Right ventricle myocardium superior (tissue), 1 donor: ENCODE measurements at regions of chr6 and their contacts with region 1.

Region 1: DNA sequence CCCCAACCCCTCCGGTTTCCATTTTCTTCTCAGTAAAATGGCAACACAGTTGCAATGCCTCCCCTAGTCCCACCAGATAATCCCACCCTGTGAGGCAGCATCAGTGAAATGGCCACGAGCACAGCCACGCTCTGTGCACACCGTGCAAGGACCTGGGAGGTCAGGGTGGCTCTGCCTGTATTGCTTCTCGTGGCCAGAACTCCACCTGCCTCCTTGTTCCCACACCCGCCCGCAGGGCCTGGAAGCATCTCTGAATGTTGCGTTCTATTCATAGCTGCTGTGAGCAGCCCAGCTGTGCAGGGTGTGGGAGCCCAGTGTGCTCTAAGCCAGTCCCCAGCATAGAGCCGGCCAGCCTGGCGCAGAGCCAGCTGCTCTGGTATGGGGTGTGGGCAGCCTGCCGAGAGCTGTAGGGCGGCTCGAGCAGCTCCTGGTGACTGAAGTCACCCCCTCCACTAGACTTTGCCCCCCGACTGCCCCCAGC is 161.1 kb downstream of the DLL1 start:
- DNase-seq: peak; percentile 89
- ATAC-seq: peak; percentile 88

Region 2: GRCh38 chr6:170049641-170050561 is 79.8 kb before region 1 on chr6:
- intact Hi-C with region 1: loop called (anchors 5 kb)
- DNase-seq: peak; percentile 92
- ATAC-seq: peak; percentile 90

Region 3: DNA sequence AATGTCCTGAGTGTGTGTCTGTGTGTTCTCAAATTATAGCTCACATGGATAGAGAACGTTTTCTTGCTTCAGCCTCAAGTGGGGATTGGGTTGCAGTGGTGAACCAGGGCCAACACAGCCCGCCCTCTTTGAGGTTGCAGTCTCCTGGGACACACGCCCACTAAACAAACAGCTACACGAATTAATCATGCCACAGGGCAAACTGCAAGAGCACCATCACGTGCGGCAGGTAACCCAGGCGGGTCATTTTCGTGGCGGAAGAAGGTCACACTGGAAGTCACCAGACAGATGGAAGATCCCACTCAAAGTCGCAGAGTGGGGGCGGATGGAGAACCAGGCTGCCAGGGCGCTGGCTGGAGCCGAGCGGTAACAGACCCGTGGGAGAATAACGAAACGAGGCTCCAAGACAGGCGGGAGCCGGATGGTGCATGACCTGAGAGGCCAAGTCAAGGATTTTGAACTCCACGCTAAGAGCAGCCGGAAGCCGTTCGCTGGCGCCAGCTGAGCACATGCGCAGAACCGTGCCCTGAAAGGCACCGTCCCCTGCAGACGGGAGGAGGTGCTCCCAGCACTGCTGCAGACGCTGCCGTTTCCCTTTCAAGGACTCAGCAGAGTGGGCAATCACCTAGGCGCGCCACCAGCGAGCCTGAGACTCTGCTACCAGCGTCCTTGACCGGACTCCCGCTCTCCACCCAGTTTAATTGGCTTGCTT is 150.4 kb after region 1 on chr6:
- intact Hi-C with region 1: loop called (anchors 10 kb)
- DNase-seq: peak; percentile 86
- ATAC-seq: peak; percentile 81